PC-9 (cell line): ENCODE measurements at regions of chrX and their contacts with region 1.

Region 1: GRCh38 chrX:46260513-46260912 is 284.7 kb downstream of the ZNF674 start:
- DNase-seq: peak; percentile 65 to 89
- H3K4me3 ChIP-seq: no peak overlapping the region
- H3K27ac ChIP-seq: peak overlapping the region; percentile 99
- H3K4me1 ChIP-seq: peaks cover 40% of the 10 kb centered on the region
- H3K27me3 ChIP-seq: no peaks in the 10 kb centered on the region
- CTCF ChIP-seq: no peak

Region 2: GRCh38 chrX:45849253-45849862 is 411.2 kb before region 1 on chrX:
- CTCF ChIA-PET with region 1: no interaction called
- POLR2A ChIA-PET with region 1: interaction called, 4 read pairs
- intact Hi-C with region 1: loop called (anchors 2 kb)
- DNase-seq: peak; percentile 8 to 78
- H3K4me3 ChIP-seq: peak overlapping the region; percentile 69
- H3K27ac ChIP-seq: peak overlapping the region; percentile 92
- H3K4me1 ChIP-seq: peaks cover 31% of the 10 kb centered on the region; the same call in 1 of the 2 replicates
- H3K27me3 ChIP-seq: no peaks in the 10 kb centered on the region
- CTCF ChIP-seq: no peak; the same call in 1 of the 2 replicates

Region 3: GRCh38 chrX:46208225-46208854 is 52.2 kb before region 1 on chrX:
- CTCF ChIA-PET with region 1: no interaction called
- POLR2A ChIA-PET with region 1: no interaction called
- intact Hi-C with region 1: loop called (anchors 2 kb)
- DNase-seq: peak in 1 of 2 experiments; percentile 83
- H3K4me3 ChIP-seq: no peak overlapping the region
- H3K27ac ChIP-seq: peak overlapping the region; percentile 93
- H3K4me1 ChIP-seq: peaks cover 29% of the 10 kb centered on the region
- H3K27me3 ChIP-seq: no peaks in the 10 kb centered on the region
- CTCF ChIP-seq: no peak

Region 4: DNA sequence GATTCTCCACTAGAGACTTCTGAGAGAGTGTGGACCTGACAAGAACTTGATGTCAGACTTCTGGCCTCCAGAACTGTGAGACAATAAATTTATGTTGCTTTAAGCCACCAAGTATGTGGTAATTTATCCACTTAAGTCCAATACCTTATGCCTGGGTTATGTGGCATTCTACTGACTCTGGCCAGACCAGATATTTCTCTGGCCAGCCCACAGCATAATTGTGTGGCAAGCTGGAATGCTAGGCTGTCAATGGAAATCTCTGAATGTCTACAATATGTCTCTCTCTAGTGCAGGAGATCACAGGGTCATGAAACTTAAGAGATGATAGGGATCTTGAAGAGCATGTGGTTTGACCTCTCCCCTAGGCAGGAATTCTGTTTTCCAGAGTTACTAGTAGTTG is 33.7 kb after region 1 on chrX:
- CTCF ChIA-PET with region 1: no interaction called
- POLR2A ChIA-PET with region 1: interaction called, 3 read pairs
- intact Hi-C with region 1: loop called (anchors 1 kb)
- DNase-seq: peak; percentile 15 to 42
- H3K4me3 ChIP-seq: no peak overlapping the region
- H3K27ac ChIP-seq: peak overlapping the region; percentile 19; the same call in 1 of the 2 replicates
- H3K4me1 ChIP-seq: no peaks in the 10 kb centered on the region
- H3K27me3 ChIP-seq: no peaks in the 10 kb centered on the region
- CTCF ChIP-seq: no peak

Region 5: DNA sequence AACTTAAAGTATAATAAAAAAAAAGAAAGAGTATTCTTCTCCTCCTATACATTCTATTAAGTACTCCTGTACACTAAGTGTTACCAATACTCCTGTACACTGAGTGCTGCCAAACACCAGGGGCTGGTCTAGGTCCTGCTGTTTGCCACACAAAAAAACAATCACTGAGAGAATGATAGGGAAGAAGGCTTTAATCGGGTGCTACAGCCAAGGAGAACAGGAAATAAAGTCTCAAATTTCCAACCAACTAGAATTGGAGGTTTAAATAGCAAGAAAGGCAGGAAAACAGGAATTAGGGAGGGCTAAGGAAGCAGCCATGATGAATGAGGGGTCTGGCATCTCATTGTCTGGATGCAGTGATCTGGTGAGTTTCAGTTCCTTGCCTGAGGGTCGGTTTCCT is 44.9 kb after region 1 on chrX:
- CTCF ChIA-PET with region 1: no interaction called
- POLR2A ChIA-PET with region 1: no interaction called
- intact Hi-C with region 1: no loop called
- DNase-seq: no peak
- H3K4me3 ChIP-seq: no peak overlapping the region
- H3K27ac ChIP-seq: no peak overlapping the region
- H3K4me1 ChIP-seq: no peaks in the 10 kb centered on the region
- H3K27me3 ChIP-seq: no peaks in the 10 kb centered on the region
- CTCF ChIP-seq: no peak

Region 6: DNA sequence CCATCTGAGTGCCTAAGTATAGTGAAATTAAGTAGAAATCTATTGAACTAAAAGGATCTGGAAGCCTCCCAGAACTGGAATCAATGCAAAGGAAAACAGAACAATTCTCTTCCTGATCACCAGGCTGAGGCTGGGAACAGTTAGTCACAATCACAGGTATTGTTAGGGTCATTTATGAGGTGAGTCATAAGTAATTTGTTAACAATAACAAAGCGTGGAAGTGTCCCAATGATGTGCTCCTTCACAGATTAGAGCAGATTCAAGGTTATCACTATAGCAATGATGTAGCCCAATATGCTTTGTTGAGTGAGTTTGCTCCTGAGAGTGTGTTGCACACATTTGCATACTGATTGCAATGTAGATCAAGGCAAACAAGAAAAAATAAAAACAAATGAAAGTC is 56.6 kb after region 1 on chrX:
- CTCF ChIA-PET with region 1: no interaction called
- POLR2A ChIA-PET with region 1: interaction called, 10 read pairs
- intact Hi-C with region 1: no loop called
- DNase-seq: peak in 1 of 2 experiments; percentile 71
- H3K4me3 ChIP-seq: no peak overlapping the region
- H3K27ac ChIP-seq: peak overlapping the region; percentile 60
- H3K4me1 ChIP-seq: no peaks in the 10 kb centered on the region
- H3K27me3 ChIP-seq: no peaks in the 10 kb centered on the region
- CTCF ChIP-seq: no peak

Region 7: DNA sequence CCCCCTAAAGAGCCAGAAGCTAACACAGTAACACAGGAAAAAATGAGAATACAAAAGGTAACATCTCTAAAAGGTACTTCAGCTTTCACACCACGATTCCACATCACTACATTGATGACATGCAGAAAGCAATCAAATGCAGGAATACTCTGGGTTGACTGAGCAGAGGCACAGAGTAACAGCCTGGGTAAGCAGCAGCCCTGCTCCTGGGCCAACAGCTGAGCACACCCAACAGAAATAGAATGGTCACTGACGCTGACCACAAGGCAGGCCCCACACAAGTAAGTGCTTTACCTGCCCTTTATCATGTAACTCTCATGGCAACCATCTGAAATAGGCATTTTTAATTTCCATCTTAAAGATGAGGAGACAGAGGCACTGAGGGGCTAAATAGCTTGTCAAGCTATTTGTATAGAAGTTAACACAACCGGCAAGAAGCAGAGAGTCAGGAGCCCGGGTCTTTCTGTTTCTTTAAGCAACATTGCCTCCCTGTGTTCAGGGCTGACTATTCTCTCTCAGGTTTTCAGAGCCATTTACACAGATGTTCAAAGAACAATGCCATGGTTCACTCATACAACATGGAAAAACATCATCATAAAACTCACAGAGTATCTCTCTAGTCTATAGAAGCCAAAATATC is 115.9 kb after region 1 on chrX:
- CTCF ChIA-PET with region 1: interaction called, 3 read pairs
- POLR2A ChIA-PET with region 1: interaction called, 4 read pairs
- intact Hi-C with region 1: loop called (anchors 2 kb)
- DNase-seq: peak; percentile 26 to 48
- H3K4me3 ChIP-seq: 0 out of 2 replicates have a peak overlapping the region, but pooled peaks have one; percentile 5
- H3K27ac ChIP-seq: peak overlapping the region; percentile 94
- H3K4me1 ChIP-seq: peaks cover 25% of the 10 kb centered on the region
- H3K27me3 ChIP-seq: no peaks in the 10 kb centered on the region
- CTCF ChIP-seq: peak; percentile 46; the same call in 1 of the 2 replicates